Activated CD8-positive, alpha-beta T cell treated with anti-CD3 and anti-CD28 coated beads for 36 hours (primary cell): ENCODE measurements at regions of chr17 and their contacts with region 1.

Region 1: DNA sequence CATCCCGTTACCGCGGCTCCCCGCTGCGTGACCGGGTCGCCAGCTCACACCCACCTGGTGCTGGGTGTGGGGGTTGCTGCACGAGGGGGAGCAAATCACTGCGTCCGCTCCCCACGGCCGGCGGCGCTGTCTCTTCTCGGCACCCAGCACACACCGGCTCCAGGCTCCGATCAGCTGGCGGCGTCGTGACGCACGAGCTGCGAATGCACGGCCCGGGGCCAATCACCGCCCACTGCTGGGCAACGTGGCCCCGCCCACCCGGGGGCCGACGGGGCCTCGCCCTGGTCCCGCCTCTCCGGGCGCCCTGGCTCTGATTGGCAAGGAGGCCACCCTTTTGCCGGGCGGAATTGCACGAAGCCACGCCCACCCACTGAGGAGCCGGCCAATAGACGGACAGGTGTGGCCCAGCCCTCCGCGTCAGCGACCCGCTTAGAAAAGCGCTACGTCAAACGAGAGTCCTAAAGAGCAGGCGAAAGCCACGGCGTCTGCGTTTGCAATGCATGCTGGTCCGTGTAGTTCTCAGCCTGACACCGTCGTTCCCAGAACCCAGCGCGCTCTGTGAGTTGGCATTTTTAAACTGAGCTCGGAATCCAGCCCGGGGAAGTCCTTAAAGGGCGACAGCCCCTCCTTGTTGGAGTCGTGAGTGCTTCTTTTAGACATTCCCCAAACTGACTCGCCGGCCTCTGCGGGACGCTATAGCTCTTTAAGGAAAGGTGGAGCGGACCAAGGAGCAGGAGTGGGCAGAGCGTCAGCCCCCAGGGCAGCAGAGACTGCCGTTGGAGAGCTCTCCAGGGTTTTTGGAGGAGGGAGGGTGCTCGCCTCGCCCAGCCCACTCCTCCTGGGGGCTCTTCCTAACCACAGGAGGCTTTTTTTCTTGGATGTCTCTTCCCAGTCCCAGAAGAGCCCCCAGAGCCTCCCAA is 6.2 kb upstream of the TLCD2 start:
- DNase-seq: peak; percentile 100
- ATAC-seq: peak; percentile 89
- H3K4me3 Mint-ChIP-seq: peak overlapping the region; percentile 93
- H3K27ac Mint-ChIP-seq: peak overlapping the region; percentile 97
- H3K4me1 Mint-ChIP-seq: peaks cover 19% of the 10 kb centered on the region
- H3K27me3 Mint-ChIP-seq: peaks cover 6% of the 10 kb centered on the region
- CTCF ChIP-seq: no peak

Region 2: DNA sequence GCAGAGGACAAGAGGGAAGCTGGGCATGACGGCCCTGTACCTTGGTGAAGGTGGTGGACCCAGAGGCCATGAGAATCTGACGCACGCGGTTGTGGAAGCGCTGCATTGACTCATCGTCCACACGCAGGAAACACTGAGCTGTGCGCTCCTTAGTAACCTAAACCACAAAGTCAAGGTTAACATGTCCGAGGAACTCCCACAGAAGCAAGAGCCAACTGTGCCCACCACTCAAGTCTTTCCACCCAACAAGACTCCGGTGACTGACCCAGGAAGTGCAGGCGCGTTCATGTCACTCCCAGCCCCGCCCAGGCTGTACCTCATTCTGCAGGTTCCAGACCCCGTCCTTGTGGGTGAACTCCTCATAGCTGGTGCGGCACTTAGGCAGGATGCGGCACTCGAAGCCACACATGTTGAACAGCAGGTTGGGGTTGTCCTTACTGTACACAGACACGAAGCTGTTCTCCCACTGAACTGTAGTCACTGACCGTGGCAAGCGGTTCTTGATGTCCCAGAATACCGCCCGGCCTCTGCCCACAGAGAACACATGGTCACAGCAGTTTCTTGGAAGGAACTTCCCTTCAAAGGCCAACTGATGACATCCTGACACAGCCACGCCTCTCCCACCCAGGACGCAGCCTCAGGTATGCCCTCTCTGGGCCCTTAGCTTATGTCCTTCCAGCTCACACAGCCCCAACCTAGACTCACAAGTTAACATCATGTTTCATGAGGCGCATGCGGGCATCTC is 43.1 kb before region 1 on chr17:
- CTCF ChIA-PET with region 1: interaction called, 13 read pairs
- POLR2A ChIA-PET with region 1: interaction called, 3 read pairs
- intact Hi-C with region 1: no loop called
- DNase-seq: no peak
- ATAC-seq: peak; percentile 26
- H3K4me3 Mint-ChIP-seq: no peak overlapping the region
- H3K27ac Mint-ChIP-seq: peak overlapping the region; percentile 39
- H3K4me1 Mint-ChIP-seq: peaks cover 16% of the 10 kb centered on the region
- H3K27me3 Mint-ChIP-seq: no peaks in the 10 kb centered on the region
- CTCF ChIP-seq: no peak

Region 3: DNA sequence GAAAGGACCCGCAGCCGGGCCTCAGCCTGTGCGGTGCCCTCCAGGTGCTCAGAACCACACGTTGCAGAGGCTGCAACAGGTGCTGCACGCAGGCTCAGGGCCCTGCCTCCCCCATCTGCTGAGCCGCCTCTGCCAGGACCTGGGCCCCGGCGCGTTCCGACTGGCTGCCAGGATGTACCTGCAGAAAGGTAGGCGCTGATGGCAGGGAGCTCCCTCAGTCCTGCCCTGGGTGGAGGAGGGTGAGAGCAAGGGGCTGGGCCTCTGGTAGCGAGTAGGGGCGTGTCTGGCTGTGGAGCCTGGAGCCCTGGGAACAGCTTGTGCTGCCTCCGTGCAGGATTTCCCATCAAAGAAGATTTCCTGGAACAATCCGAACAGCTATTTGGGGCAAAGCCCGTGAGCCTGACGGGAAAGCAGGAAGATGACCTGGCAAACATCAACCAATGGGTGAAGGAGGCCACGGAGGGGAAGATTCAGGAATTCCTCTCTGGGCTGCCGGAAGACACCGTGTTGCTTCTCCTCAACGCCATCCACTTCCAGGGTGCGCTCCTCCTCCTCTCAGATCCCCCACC is 30.7 kb after region 1 on chr17:
- CTCF ChIA-PET with region 1: no interaction called
- POLR2A ChIA-PET with region 1: no interaction called
- intact Hi-C with region 1: no loop called
- DNase-seq: no peak
- ATAC-seq: no peak
- H3K4me3 Mint-ChIP-seq: no peak overlapping the region
- H3K27ac Mint-ChIP-seq: no peak overlapping the region
- H3K4me1 Mint-ChIP-seq: no peaks in the 10 kb centered on the region
- H3K27me3 Mint-ChIP-seq: no peaks in the 10 kb centered on the region
- CTCF ChIP-seq: no peak

Region 4: GRCh38 chr17:1829592-1830257 is 113.4 kb after region 1 on chr17 and contains the starts of genes RPA1 and SMYD4:
- CTCF ChIA-PET with region 1: interaction called, 12 read pairs
- POLR2A ChIA-PET with region 1: interaction called, 6 read pairs
- intact Hi-C with region 1: no loop called
- DNase-seq: peak; percentile 90
- ATAC-seq: peak; percentile 98
- H3K4me3 Mint-ChIP-seq: peak within 1 kb of the TSS; percentile 92
- H3K27ac Mint-ChIP-seq: peak within 1 kb of the TSS; percentile 93
- H3K4me1 Mint-ChIP-seq: peaks cover 59% of the 10 kb centered on the region
- H3K27me3 Mint-ChIP-seq: no peaks in the 10 kb centered on the region
- CTCF ChIP-seq: no peak
- total RNA-seq, gene RPA1: 189 to 197 TPM
- total RNA-seq, gene SMYD4: 22.2 to 22.7 TPM

Region 5: GRCh38 chr17:1870592-1870991 is 154.3 kb after region 1 on chr17:
- CTCF ChIA-PET with region 1: interaction called, 23 read pairs
- POLR2A ChIA-PET with region 1: interaction called, 8 read pairs
- intact Hi-C with region 1: loop called (anchors 5 kb)
- DNase-seq: no peak
- ATAC-seq: peak; percentile 77
- H3K4me3 Mint-ChIP-seq: peak overlapping the region; percentile 29
- H3K27ac Mint-ChIP-seq: peak overlapping the region; percentile 92
- H3K4me1 Mint-ChIP-seq: peaks cover 50% of the 10 kb centered on the region
- H3K27me3 Mint-ChIP-seq: no peaks in the 10 kb centered on the region
- CTCF ChIP-seq: no peak